ENCODE measurements at regions of chr6 and their contacts with region 1.

Region 1: DNA sequence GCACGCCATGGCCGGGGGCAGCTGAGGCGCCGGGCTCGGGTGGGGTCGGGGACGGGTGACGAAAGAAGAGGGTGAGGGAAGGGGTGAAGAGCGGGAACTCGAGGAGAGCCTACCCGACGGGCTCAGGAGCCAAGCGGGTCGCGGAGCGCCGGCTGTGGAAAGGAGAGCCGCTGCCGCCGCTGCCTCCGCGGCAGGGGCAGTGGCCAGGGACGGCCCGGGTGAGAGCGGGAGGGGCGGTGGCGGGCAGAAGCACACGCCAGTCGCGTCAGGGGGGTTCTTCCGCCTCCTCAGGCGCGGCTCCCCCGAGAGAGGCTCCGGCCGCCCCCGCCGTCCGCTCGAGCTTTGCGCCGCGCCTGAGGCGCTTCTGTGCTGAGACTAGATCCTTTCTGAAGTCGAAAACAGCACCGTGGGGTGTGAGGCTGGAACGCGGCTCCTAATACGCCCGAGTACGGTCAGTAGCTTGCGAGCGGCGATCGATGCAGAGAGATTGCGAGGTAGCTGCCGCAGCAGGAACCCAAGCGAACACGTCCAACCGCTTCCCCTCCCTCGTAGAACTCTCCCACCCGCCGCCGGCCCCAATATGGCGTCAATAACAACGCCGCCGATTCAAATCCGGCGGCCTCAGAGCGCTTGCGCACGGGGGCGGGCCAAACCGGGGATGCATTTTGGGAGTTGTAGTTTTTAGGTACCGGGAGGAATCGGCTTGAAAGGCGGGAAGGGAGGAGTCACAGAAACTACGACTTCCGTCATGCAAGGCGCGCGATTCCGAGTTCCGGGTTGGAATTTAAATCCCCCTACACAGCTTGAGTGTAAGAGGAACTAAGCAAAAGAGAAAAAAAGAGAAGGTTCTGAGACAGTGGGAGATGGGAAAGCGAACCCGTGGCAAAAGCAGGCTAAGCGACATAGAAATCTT is at the start of gene AKIRIN2:
- DNase-seq: peak; percentile 97
- H3K4me3 Mint-ChIP-seq: peak within 1 kb of the TSS; percentile 98
- H3K27ac Mint-ChIP-seq: peak within 1 kb of the TSS; percentile 96
- H3K4me1 Mint-ChIP-seq: peaks cover 61% of the 10 kb centered on the region
- H3K27me3 Mint-ChIP-seq: no peaks in the 10 kb centered on the region
- total RNA-seq, gene AKIRIN2: 56.5 to 58.5 TPM

Region 2: DNA sequence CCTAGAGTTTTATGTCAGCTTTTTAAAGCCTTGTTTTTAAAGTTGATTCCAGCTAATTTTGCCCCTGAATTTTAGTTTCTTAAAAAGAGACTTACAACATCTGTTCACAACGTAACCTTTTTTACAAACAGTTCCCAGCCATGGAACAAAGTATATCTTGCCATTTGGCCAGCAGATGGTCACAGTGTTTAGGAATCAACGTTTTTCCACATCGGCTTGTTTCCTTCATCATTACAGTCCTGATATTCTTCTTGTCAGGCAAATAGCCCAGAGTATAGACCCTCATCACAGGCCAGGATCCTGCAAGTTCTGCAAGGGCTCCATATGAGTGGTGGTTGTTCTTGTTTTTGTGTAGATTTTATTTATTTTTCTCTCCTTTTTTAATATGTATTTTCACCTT is 1106.3 kb before region 1 on chr6:
- CTCF ChIA-PET with region 1: no interaction called
- POLR2A ChIA-PET with region 1: no interaction called
- DNase-seq: no peak
- H3K4me3 Mint-ChIP-seq: no peak overlapping the region
- H3K27ac Mint-ChIP-seq: no peak overlapping the region
- H3K4me1 Mint-ChIP-seq: no peaks in the 10 kb centered on the region
- H3K27me3 Mint-ChIP-seq: no peaks in the 10 kb centered on the region

Region 3: GRCh38 chr6:87540539-87540938 is 161.4 kb before region 1 on chr6:
- CTCF ChIA-PET with region 1: no interaction called
- POLR2A ChIA-PET with region 1: no interaction called
- DNase-seq: no peak
- H3K4me3 Mint-ChIP-seq: no peak overlapping the region
- H3K27ac Mint-ChIP-seq: no peak overlapping the region
- H3K4me1 Mint-ChIP-seq: peaks cover 5% of the 10 kb centered on the region
- H3K27me3 Mint-ChIP-seq: no peaks in the 10 kb centered on the region

Region 4: GRCh38 chr6:87589693-87590549 is 112.0 kb before region 1 on chr6 and contains the starts of genes ORC3 and RARS2:
- CTCF ChIA-PET with region 1: interaction called, 3 read pairs
- POLR2A ChIA-PET with region 1: interaction called, 38 read pairs
- DNase-seq: peak; percentile 96
- H3K4me3 Mint-ChIP-seq: peak within 1 kb of the TSS; percentile 88
- H3K27ac Mint-ChIP-seq: peak within 1 kb of the TSS; percentile 77
- H3K4me1 Mint-ChIP-seq: peaks cover 59% of the 10 kb centered on the region
- H3K27me3 Mint-ChIP-seq: no peaks in the 10 kb centered on the region
- total RNA-seq, gene ORC3: 24.1 to 24.5 TPM
- total RNA-seq, gene RARS2: 23.2 to 24.3 TPM

Region 5: DNA sequence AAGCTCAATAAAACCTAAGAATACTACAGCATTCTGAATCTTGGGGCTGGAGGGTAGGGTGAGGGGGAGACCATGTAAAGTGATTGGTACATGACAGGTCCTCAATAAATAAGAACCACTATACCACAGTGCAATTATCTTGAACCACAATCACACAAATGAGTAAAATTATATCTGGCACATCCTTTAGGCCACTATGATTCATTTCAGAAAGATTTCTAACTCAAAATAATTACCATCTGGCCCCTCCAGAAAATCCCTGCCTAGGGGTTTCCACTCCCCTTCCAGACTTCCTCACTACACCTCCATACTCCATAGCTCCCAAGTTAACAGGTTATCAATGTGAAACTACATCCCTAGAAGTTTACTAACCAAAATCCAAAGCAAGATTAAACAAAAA is 19.6 kb before region 1 on chr6:
- CTCF ChIA-PET with region 1: interaction called, 5 read pairs
- POLR2A ChIA-PET with region 1: interaction called, 21 read pairs
- DNase-seq: no peak
- H3K4me3 Mint-ChIP-seq: no peak overlapping the region
- H3K27ac Mint-ChIP-seq: no peak overlapping the region
- H3K4me1 Mint-ChIP-seq: peaks cover 75% of the 10 kb centered on the region
- H3K27me3 Mint-ChIP-seq: no peaks in the 10 kb centered on the region

Region 6: GRCh38 chr6:87714093-87714809 is 12.3 kb after region 1 on chr6:
- CTCF ChIA-PET with region 1: interaction called, 5 read pairs
- POLR2A ChIA-PET with region 1: interaction called, 22 read pairs
- DNase-seq: no peak
- H3K4me3 Mint-ChIP-seq: no peak overlapping the region
- H3K27ac Mint-ChIP-seq: peak overlapping the region; percentile 63
- H3K4me1 Mint-ChIP-seq: peaks cover 34% of the 10 kb centered on the region
- H3K27me3 Mint-ChIP-seq: no peaks in the 10 kb centered on the region

Region 7: DNA sequence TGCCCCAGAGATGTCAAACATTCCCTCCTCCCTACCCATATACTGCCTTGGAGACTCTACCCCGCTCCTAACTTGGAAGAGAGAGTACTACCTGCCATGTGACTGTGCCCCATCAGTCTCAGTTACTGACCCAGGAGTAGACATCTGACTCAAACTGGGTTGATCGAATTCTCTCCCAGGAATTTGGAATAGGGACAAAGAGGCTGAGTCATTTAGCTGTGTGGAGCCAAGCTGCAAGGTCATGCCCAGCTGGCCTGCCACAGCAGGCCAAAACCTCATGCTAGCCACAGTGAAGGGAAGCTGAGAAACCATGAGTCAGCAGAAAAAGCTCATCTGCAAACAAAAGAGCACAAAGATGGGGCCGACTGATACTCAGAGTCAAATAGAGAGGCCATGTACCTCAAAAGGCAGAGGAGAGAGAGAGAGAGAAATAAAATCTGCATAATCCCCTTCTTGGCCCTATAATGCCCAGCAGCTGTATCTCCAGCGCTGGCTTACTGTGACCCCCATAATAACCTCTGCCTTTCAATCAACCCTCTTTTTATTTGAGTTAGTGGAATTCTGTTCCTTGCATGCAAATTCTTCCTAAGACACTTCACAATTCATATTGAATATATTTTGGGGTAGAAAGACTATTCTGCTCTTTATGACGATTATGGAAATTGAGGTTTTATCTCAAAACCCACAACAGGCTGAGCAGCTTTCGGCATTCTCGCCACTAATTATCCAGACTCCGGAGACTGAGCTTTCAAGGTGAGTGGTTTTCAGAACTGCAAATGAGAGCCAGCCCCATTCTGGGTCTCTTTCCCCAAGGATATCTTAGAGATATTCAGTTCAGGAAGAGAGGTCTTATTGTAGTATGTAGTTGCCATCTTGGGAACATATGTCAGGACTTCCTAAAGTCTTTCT is 21.5 kb after region 1 on chr6:
- CTCF ChIA-PET with region 1: interaction called, 5 read pairs
- POLR2A ChIA-PET with region 1: interaction called, 22 read pairs
- DNase-seq: peak; percentile 43
- H3K4me3 Mint-ChIP-seq: no peak overlapping the region
- H3K27ac Mint-ChIP-seq: peak overlapping the region; percentile 23
- H3K4me1 Mint-ChIP-seq: peaks cover 42% of the 10 kb centered on the region
- H3K27me3 Mint-ChIP-seq: no peaks in the 10 kb centered on the region

Region 8: GRCh38 chr6:87742106-87742505 is 40.2 kb after region 1 on chr6:
- CTCF ChIA-PET with region 1: interaction called, 3 read pairs
- POLR2A ChIA-PET with region 1: interaction called, 22 read pairs
- DNase-seq: peak; percentile 83
- H3K4me3 Mint-ChIP-seq: no peak overlapping the region
- H3K27ac Mint-ChIP-seq: peak overlapping the region; percentile 83
- H3K4me1 Mint-ChIP-seq: peaks cover 47% of the 10 kb centered on the region
- H3K27me3 Mint-ChIP-seq: peaks cover 5% of the 10 kb centered on the region

Measured in activated CD4-positive, alpha-beta memory T cell treated with anti-CD3 and anti-CD28 coated beads, Interleukin-2, amount 10 ng/mL, durations not matched to agents 7 days and 5 days (primary cell).